CD8-positive, alpha-beta T cell (primary cell): ENCODE measurements at regions of chr9 and their contacts with region 1.

Region 1: GRCh38 chr9:131237931-131238401 is 38.3 kb downstream of the FAM78A start:
- DNase-seq: peak; percentile 71 to 94 (median 88)
- ATAC-seq: peak; percentile 92
- H3K4me3 ChIP-seq: peak overlapping the region; percentile 15 to 50
- H3K4me3 Mint-ChIP-seq: peak overlapping the region; percentile 83
- H3K27ac ChIP-seq: peak overlapping the region; percentile 54 to 73
- H3K27ac Mint-ChIP-seq: peak overlapping the region; percentile 98
- H3K4me1 ChIP-seq: peaks cover 41% of the 10 kb centered on the region
- H3K4me1 Mint-ChIP-seq: peaks cover 42% of the 10 kb centered on the region
- H3K27me3 ChIP-seq: no peaks in the 10 kb centered on the region
- H3K27me3 Mint-ChIP-seq: no peaks in the 10 kb centered on the region
- CTCF ChIP-seq: no peak

Region 2: DNA sequence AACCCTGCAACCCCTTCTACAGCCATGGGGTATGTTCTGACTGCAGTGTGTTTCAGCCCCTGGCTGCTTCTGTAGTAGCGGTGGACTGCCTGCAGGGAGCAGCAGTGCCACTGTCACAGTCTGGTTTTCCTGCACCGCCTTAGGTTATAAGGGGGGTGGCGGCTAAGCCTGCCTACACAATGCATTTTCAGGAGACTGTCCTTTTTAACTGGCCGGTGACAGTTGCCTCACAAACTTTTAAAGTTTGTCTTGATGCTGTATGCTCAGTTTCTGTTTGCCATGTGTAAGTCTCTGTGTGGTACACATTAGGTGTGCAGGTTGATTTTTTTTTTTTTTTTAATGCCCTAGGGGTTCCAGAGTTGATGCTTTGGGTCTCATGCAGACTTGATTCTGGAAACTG is 59.6 kb before region 1 on chr9:
- CTCF ChIA-PET with region 1: interaction called, 4 read pairs
- POLR2A ChIA-PET with region 1: interaction called, 3 read pairs
- intact Hi-C with region 1: loop called in 1 of 2 experiments (anchors 1 kb)
- DNase-seq: peak; percentile 65 to 86 (median 77)
- ATAC-seq: peak; percentile 100
- H3K4me3 ChIP-seq: no peak overlapping the region
- H3K4me3 Mint-ChIP-seq: no peak overlapping the region
- H3K27ac ChIP-seq: no peak overlapping the region
- H3K27ac Mint-ChIP-seq: no peak overlapping the region
- H3K4me1 ChIP-seq: no peaks in the 10 kb centered on the region
- H3K4me1 Mint-ChIP-seq: peaks cover 12% of the 10 kb centered on the region
- H3K27me3 ChIP-seq: no peaks in the 10 kb centered on the region
- H3K27me3 Mint-ChIP-seq: no peaks in the 10 kb centered on the region
- CTCF ChIP-seq: peak; percentile 99

Region 3: DNA sequence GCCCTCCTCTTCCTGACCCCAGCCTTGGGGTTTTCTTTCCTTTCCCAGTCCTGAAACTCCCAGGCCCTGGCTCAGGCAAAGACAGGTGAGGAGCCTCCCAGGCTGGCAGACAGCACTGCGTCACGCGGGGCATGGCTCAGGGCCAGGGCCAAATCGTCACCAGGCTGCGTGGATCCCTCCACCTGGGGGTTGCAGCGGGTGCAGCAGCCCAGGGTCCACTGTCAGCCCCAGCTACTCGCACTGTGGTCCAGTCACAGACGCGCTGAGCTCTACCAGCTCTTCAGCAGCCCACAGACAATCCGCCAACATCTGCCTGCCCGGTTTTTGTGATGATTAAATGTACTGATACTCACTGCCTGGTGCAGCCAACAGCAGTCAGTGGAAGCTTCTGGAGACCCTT is 26.3 kb after region 1 on chr9:
- CTCF ChIA-PET with region 1: interaction called, 3 read pairs
- POLR2A ChIA-PET with region 1: interaction called, 49 read pairs
- intact Hi-C with region 1: no loop called
- DNase-seq: peak in 6 of 9 experiments; percentile 54 to 74 (median 67)
- ATAC-seq: peak; percentile 21
- H3K4me3 ChIP-seq: peak overlapping the region in 1 of 2 experiments; percentile 7
- H3K4me3 Mint-ChIP-seq: peak overlapping the region; percentile 82
- H3K27ac ChIP-seq: peak overlapping the region; percentile 50 to 63
- H3K27ac Mint-ChIP-seq: peak overlapping the region; percentile 99
- H3K4me1 ChIP-seq: peaks cover 86% of the 10 kb centered on the region
- H3K4me1 Mint-ChIP-seq: peaks cover 76% of the 10 kb centered on the region
- H3K27me3 ChIP-seq: no peaks in the 10 kb centered on the region
- H3K27me3 Mint-ChIP-seq: no peaks in the 10 kb centered on the region
- CTCF ChIP-seq: peak; percentile 20

Region 4: GRCh38 chr9:131270171-131271015 is 32.4 kb after region 1 on chr9:
- CTCF ChIA-PET with region 1: interaction called, 3 read pairs
- POLR2A ChIA-PET with region 1: interaction called, 34 read pairs
- intact Hi-C with region 1: loop called in 1 of 2 experiments (anchors 1 kb)
- DNase-seq: peak in 6 of 9 experiments; percentile 38 to 82 (median 62)
- ATAC-seq: peak; percentile 7
- H3K4me3 ChIP-seq: peak overlapping the region; percentile 90 to 95
- H3K4me3 Mint-ChIP-seq: peak overlapping the region; percentile 98
- H3K27ac ChIP-seq: peak overlapping the region; percentile 84 to 93
- H3K27ac Mint-ChIP-seq: peak overlapping the region; percentile 94
- H3K4me1 ChIP-seq: peaks cover 60% of the 10 kb centered on the region
- H3K4me1 Mint-ChIP-seq: peaks cover 70% of the 10 kb centered on the region
- H3K27me3 ChIP-seq: no peaks in the 10 kb centered on the region
- H3K27me3 Mint-ChIP-seq: no peaks in the 10 kb centered on the region
- CTCF ChIP-seq: no peak